WTC11 (cell line): ENCODE measurements at regions of chr6 and their contacts with region 1.

Region 1: GRCh38 chr6:89940225-89941027 is 46.2 kb downstream of the GJA10 start:
- DNase-seq: peak; percentile 63
- ATAC-seq: peak; percentile 97
- H3K4me3 Mint-ChIP-seq: no peak overlapping the region
- H3K27ac Mint-ChIP-seq: no peak overlapping the region
- H3K4me1 Mint-ChIP-seq: no peaks in the 10 kb centered on the region
- H3K27me3 Mint-ChIP-seq: no peaks in the 10 kb centered on the region
- CTCF ChIP-seq: peak; percentile 14; the same call in 1 of the 2 replicates

Region 2: DNA sequence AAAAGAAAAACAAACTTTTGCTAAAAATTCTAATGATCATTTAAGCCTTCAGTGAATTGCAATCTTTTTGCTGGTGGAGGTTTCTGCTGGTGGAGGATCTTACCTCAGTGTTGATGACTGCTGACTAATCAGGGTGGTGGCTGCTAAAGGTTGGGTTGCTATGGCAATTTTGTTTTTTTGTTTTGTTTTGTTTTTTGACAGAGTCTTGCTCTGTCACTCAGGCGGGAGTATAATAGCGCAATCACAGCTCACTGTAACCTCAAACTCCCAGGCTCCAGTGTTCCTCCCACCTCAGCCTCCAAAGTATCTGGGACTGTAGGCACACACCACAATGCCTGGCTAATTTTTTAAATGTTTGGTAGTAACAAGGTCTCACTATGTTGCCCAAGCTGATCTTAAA is 412.8 kb before region 1 on chr6:
- CTCF ChIA-PET with region 1: no interaction called
- POLR2A ChIA-PET with region 1: no interaction called
- DNase-seq: no peak
- ATAC-seq: no peak
- H3K4me3 Mint-ChIP-seq: no peak overlapping the region
- H3K27ac Mint-ChIP-seq: no peak overlapping the region
- H3K4me1 Mint-ChIP-seq: no peaks in the 10 kb centered on the region
- H3K27me3 Mint-ChIP-seq: no peaks in the 10 kb centered on the region; the same call in 1 of the 2 replicates
- CTCF ChIP-seq: no peak

Region 3: DNA sequence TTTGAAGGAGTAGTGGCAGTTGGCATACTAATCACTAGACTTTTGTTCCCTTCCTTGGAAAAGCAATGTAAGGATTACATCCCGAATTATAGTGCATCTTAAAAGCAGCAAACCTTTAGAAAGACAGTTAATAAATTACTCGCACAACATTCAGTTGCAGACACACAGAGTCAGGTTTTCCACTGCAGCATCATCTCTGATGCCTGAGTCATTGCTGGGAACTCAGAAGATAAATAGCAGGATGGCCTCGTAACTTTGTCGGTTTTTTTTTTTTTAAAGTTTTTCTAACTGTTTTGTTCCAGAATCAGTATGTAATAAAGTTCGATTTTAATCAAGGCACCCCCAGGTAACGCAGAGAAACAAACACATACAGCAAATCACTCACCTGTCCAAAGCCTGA is 11.8 kb before region 1 on chr6:
- CTCF ChIA-PET with region 1: interaction called, 16 read pairs
- POLR2A ChIA-PET with region 1: no interaction called
- DNase-seq: no peak
- ATAC-seq: no peak
- H3K4me3 Mint-ChIP-seq: no peak overlapping the region
- H3K27ac Mint-ChIP-seq: no peak overlapping the region
- H3K4me1 Mint-ChIP-seq: peaks cover 10% of the 10 kb centered on the region
- H3K27me3 Mint-ChIP-seq: no peaks in the 10 kb centered on the region
- CTCF ChIP-seq: no peak

Region 4: GRCh38 chr6:89984926-89985750 is 44.7 kb after region 1 on chr6:
- CTCF ChIA-PET with region 1: interaction called, 26 read pairs
- POLR2A ChIA-PET with region 1: no interaction called
- DNase-seq: no peak
- ATAC-seq: peak; percentile 50
- H3K4me3 Mint-ChIP-seq: no peak overlapping the region
- H3K27ac Mint-ChIP-seq: no peak overlapping the region
- H3K4me1 Mint-ChIP-seq: peaks cover 14% of the 10 kb centered on the region
- H3K27me3 Mint-ChIP-seq: no peaks in the 10 kb centered on the region; the same call in 1 of the 2 replicates
- CTCF ChIP-seq: no peak

Region 5: GRCh38 chr6:90216072-90216977 is 275.9 kb after region 1 on chr6:
- CTCF ChIA-PET with region 1: interaction called, 11 read pairs
- POLR2A ChIA-PET with region 1: no interaction called
- DNase-seq: peak; percentile 20
- ATAC-seq: peak; percentile 29
- H3K4me3 Mint-ChIP-seq: no peak overlapping the region
- H3K27ac Mint-ChIP-seq: peak overlapping the region; percentile 61
- H3K4me1 Mint-ChIP-seq: 0 out of 2 replicates have a peak, but pooled peaks cover 7% of the 10 kb centered on the region
- H3K27me3 Mint-ChIP-seq: no peaks in the 10 kb centered on the region
- CTCF ChIP-seq: no peak

Region 6: DNA sequence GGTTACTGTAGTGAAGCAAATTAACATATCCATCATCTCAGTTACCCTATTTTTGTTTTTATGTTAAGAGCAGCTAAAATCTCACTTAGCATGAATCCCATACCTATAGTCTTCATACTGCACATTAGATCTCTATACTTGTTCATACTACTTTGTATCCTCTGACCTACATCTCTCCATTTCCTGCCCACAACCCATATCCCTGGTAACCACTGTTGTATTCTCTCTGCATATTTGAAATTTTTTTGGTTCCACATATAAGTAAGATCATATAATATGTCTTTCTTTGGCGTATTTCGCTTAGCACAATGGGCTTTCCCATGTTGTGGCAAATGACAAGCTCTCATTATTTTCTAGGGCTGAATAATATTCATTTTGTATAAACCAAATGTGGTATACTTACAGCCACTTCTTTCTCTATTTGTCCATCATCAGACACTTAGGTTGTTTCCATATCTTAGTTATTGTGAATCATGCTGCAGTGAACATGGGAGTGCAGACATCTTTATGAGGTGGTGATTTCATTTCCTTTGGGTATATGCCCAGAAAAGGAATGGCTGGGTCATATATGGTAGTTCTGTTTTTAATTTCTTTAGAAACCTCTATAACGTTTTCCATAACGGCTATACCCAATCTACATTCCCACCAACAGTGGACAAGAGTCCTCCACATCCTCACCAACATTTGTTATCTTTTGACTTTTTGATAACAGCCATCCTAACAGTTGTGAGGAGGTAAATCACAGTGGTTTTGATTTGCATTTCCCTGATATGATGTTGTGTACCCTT is 316.5 kb after region 1 on chr6:
- CTCF ChIA-PET with region 1: no interaction called
- POLR2A ChIA-PET with region 1: no interaction called
- DNase-seq: no peak
- ATAC-seq: no peak
- H3K4me3 Mint-ChIP-seq: no peak overlapping the region
- H3K27ac Mint-ChIP-seq: no peak overlapping the region
- H3K4me1 Mint-ChIP-seq: no peaks in the 10 kb centered on the region
- H3K27me3 Mint-ChIP-seq: no peaks in the 10 kb centered on the region
- CTCF ChIP-seq: no peak

Region 7: GRCh38 chr6:90296346-90297114 is 356.1 kb after region 1 on chr6 and contains the start of gene BACH2:
- CTCF ChIA-PET with region 1: interaction called, 14 read pairs
- POLR2A ChIA-PET with region 1: no interaction called
- DNase-seq: peak; percentile 95
- ATAC-seq: peak; percentile 75
- H3K4me3 Mint-ChIP-seq: peak within 1 kb of the TSS; percentile 74
- H3K27ac Mint-ChIP-seq: no peak within 1 kb of the TSS
- H3K4me1 Mint-ChIP-seq: peaks cover 34% of the 10 kb centered on the region
- H3K27me3 Mint-ChIP-seq: peaks cover 51% of the 10 kb centered on the region
- CTCF ChIP-seq: no peak
- total RNA-seq, gene BACH2: 3.9 to 5.9 TPM (median 4.5 TPM) in 3 replicates

Region 8: DNA sequence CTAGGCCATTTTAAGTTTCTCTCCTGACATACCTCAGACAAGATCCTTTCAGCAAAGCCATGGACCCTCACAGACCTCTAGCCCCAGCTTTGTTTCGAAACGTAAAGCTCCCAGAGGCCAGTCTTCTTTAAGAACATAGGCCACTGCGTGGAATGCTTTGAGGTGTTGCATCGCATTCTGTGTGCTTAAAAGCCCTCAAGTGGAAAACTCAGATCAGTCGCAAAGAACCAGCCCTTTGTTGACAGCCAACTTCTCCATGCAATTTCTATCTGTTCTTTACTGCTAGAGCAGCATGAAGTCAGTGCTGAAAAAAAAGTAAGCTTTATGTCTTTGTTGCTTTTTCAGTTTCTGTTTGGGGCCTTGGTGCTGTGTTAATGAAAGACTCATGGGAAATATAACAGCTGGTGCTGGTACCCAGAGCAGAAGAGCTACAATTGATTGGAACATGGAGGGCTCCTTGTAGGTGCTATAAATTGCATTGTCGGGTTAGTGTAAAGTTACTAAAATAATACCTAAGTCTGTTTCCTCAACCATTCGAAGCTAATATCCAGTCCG is 503.8 kb after region 1 on chr6:
- CTCF ChIA-PET with region 1: interaction called, 14 read pairs
- POLR2A ChIA-PET with region 1: no interaction called
- DNase-seq: no peak
- ATAC-seq: no peak
- H3K4me3 Mint-ChIP-seq: no peak overlapping the region
- H3K27ac Mint-ChIP-seq: no peak overlapping the region
- H3K4me1 Mint-ChIP-seq: peaks cover 37% of the 10 kb centered on the region
- H3K27me3 Mint-ChIP-seq: no peaks in the 10 kb centered on the region; the same call in 1 of the 2 replicates
- CTCF ChIP-seq: no peak